GM10248 (cell line): ENCODE measurements at regions of chr4 and their contacts with region 1.

Region 1: DNA sequence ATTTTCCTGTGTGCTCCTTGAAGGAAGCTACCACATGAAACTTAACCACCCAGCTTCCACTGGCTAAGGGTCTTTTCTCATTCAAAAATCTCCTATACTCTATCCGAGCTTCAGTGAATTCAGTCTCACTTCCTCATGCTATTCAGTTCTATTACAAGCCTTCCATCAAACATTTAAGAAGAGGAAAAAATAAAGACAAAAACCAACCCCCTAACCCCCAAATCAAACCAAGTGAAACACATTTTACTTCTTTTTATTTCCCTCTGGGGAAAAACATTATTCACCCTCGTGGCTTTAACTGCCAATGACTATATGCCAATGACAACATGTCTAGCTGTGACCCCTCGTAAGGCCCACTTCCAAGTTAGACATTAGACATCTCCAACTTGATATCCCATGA is 16.2 kb upstream of the WDR19 start:
- DNase-seq: no peak
- CTCF ChIP-seq: no peak

Region 2: DNA sequence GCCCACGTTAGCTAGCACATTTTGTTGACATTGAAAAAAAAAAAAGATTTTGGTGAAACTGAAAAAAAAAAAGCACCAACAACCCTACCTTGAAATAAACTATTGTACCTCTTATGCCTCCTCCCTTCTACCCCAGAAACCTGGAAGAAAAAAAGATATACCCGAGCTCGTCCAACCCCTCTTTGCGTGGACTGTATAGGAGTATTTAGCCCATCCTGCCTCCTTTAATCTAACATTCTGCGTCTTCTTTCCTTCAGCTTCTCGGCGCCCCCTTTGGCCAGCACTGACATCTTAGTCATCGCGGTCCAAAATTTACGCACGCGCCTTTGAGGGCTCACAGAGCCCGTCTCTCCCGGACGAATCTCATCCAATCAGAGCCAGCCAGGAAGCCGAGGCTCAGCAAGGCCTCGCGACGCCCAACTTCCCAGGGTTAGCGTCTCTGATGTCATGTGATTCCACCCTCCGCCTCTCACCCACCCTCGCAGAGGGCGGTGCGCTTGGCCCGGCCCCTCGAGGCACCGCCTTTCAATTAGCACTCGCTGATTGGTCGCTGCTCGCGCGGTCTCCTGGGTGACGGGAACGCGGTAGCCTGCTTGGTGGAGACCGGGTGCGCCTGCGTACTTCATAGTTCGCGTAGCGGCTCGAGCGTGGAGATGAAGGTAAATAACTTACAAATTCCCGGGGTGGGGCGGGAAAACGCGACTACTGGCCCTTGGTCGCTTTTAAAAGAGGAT is 15.9 kb after region 1 on chr4 and contains the start of gene WDR19:
- CTCF ChIA-PET with region 1: interaction called, 10 read pairs
- POLR2A ChIA-PET with region 1: no interaction called
- DNase-seq: peak; percentile 97
- CTCF ChIP-seq: peak; percentile 52

Region 3: DNA sequence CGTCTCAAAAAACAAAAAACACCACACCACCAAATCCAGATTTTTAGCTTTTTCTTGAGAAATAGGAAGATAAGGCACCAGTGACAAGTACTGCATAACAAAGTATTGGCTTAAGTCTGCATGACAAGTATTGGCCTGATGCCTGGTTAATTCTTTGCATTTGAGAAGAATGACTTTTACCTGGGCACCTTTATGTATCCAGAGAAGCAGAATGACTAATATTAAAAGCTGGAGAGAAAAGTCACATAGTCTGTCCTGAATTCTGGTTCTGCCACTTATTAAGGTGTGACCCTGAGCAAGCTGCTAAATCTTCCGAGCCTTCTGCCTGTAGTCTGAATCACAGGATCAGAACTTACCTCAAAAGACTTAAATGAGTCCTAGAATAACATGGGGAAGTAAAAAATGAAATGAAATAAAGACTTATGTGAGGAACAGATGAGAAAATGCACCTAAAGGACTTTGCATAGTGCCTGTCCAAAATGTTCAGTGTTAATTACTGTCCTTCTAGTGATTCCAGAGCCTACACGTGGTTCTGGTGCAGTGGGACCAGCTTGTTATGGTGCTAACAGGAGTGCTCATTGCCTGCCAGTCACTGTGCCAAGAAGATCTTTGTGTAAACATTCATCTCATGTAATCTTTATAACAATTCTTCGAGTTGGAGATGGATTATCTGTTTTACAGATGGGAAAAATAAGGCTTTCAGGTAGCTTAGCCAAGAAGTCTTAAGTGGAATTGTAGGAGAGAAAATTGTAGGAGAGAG is 329.5 kb after region 1 on chr4:
- CTCF ChIA-PET with region 1: no interaction called
- POLR2A ChIA-PET with region 1: no interaction called
- DNase-seq: no peak
- CTCF ChIP-seq: no peak